Activated CD4-positive, alpha-beta memory T cell treated with anti-CD3 and anti-CD28 coated beads for 36 hours (primary cell): ENCODE measurements at regions of chr1 and their contacts with region 1.

Region 1: GRCh38 chr1:150162862-150163706 is 13.4 kb downstream of the PLEKHO1 start:
- DNase-seq: no peak
- H3K4me3 Mint-ChIP-seq: no peak overlapping the region
- H3K27ac Mint-ChIP-seq: no peak overlapping the region
- H3K4me1 Mint-ChIP-seq: peaks cover 34% of the 10 kb centered on the region
- H3K27me3 Mint-ChIP-seq: no peaks in the 10 kb centered on the region

Region 2: GRCh38 chr1:149997585-149998262 is 165.4 kb before region 1 on chr1:
- CTCF ChIA-PET with region 1: no interaction called
- POLR2A ChIA-PET with region 1: no interaction called
- intact Hi-C with region 1: loop called (anchors 5 kb)
- DNase-seq: peak; percentile 29
- H3K4me3 Mint-ChIP-seq: no peak overlapping the region
- H3K27ac Mint-ChIP-seq: peak overlapping the region; percentile 29
- H3K4me1 Mint-ChIP-seq: peaks cover 58% of the 10 kb centered on the region
- H3K27me3 Mint-ChIP-seq: no peaks in the 10 kb centered on the region

Region 3: DNA sequence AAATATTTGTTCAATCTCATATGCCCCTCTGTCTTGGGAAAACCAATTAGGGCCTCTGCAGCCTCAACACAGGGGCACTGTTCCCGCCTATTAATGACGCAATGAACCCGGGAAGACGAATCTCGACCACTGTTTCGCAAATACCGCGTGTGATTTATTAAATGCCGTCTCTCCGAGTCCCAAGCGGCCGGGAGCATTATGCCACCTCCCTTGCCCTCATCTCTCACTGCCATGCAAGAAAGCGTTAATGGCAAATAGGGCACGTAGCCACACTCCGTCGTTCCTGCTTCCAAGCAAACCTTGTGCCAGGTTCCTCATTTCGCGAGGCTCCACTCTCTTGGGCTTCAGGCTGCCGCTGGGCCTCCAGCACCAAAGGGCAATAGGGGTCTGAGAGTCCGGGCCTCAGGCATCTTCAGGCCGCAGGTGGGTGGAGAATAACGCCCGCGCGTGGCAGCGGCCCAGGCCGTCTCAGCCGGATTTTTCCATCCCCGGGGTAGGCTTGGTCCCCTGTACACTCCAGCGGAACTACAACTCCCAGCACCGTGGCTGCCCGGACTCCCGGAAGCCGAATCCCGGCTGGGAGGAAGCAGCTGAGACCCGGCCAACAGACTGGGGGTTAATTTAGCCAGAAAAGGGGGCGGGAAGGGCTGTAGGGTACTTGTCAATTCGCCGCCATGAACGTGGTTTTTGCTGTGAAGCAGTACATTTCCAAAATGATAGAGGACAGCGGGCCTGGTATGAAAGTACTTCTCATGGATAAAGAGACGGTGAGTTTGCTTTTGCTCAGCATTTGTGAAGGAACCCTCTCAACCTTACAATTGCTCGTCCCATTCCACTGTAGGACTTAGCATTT is 95.7 kb before region 1 on chr1 and contains the start of gene VPS45:
- CTCF ChIA-PET with region 1: interaction called, 180 read pairs
- POLR2A ChIA-PET with region 1: interaction called, 6 read pairs
- intact Hi-C with region 1: loop called (anchors 2 kb)
- DNase-seq: peak; percentile 92
- H3K4me3 Mint-ChIP-seq: peak within 1 kb of the TSS; percentile 94
- H3K27ac Mint-ChIP-seq: peak within 1 kb of the TSS; percentile 96
- H3K4me1 Mint-ChIP-seq: peaks cover 33% of the 10 kb centered on the region
- H3K27me3 Mint-ChIP-seq: no peaks in the 10 kb centered on the region
- total RNA-seq, gene VPS45: 26.5 to 28.3 TPM

Region 4: DNA sequence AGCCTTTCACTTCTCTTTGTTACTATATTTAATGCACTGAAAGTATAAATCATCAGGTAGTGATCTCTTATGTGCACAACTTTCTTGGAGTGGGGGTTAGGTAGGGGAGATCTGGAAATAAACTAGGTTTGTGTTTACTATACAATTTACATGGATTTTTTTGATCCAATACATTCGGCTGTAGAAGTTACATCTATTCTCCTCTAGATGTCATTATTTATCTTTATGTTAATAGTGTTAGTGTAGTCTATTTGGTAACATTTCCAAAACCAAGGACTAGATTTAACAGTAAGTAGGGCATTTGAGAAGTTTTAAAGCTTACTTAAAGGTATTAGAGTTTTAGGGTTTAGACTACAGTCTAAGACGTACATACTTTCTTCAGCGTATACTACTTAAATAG is 90.1 kb before region 1 on chr1:
- CTCF ChIA-PET with region 1: interaction called, 180 read pairs
- POLR2A ChIA-PET with region 1: interaction called, 6 read pairs
- intact Hi-C with region 1: loop called (anchors 1 kb)
- DNase-seq: no peak
- H3K4me3 Mint-ChIP-seq: no peak overlapping the region
- H3K27ac Mint-ChIP-seq: no peak overlapping the region
- H3K4me1 Mint-ChIP-seq: peaks cover 30% of the 10 kb centered on the region
- H3K27me3 Mint-ChIP-seq: no peaks in the 10 kb centered on the region

Region 5: DNA sequence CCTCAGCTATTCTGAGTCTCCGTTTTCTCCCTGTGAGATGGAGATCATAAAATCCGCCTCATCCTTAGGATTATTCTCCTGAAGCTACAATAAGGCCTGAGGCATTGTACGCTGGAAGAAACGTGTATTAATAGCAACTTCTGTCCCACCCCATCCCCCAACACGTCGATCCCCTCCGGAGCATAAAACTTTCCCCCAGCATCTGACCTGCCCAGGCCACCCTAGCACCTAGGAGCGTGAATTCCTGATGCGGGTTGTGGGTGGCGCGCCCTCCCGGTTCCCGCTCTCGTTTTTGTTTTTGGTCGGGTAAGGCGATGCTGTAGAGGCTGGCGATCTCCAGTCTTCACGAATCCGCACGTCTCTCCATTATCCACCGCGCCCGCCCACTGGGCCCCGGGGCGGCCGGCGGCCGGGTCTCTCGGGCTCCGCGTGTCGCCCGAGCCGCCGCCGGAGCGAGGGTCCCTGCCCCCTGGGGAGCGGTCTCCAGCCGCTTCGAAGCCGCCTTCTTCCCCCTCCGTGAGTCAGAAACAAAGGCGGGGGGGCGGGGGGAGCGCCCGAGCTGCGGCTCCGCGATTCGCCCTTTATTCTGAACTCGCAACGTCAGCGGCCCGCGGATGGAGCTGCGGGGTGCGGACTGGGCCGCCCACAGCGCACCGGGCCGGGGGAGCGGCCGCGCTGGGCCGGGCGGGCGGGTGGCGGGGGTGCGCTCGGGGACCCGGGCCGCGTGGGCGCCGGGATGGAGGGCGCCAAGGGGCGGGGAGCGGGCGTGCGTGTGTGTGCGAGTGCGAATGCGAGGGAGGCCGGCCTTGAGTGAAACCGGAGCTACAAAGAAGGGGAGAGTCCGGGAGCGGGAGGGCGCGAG is 13.6 kb before region 1 on chr1 and contains the start of gene PLEKHO1:
- CTCF ChIA-PET with region 1: interaction called, 8 read pairs
- POLR2A ChIA-PET with region 1: interaction called, 7 read pairs
- intact Hi-C with region 1: loop called (anchors 1 kb)
- DNase-seq: peak; percentile 90
- H3K4me3 Mint-ChIP-seq: peak within 1 kb of the TSS; percentile 90
- H3K27ac Mint-ChIP-seq: peak within 1 kb of the TSS; percentile 93
- H3K4me1 Mint-ChIP-seq: peaks cover 68% of the 10 kb centered on the region
- H3K27me3 Mint-ChIP-seq: no peaks in the 10 kb centered on the region
- total RNA-seq, gene PLEKHO1: 28.7 to 31.8 TPM

Region 6: GRCh38 chr1:150176593-150176992 is 13.5 kb after region 1 on chr1:
- CTCF ChIA-PET with region 1: interaction called, 10 read pairs
- POLR2A ChIA-PET with region 1: no interaction called
- intact Hi-C with region 1: no loop called
- DNase-seq: no peak
- H3K4me3 Mint-ChIP-seq: no peak overlapping the region
- H3K27ac Mint-ChIP-seq: no peak overlapping the region
- H3K4me1 Mint-ChIP-seq: no peaks in the 10 kb centered on the region
- H3K27me3 Mint-ChIP-seq: no peaks in the 10 kb centered on the region